CD14-positive monocyte (primary cell): ENCODE measurements at regions of chr16 and their contacts with region 1.

Region 1: GRCh38 chr16:52912565-52913173 is 140.0 kb downstream of the CHD9NB start:
- DNase-seq: peak; percentile 2 to 24 (median 23)
- H3K4me3 ChIP-seq: no peak overlapping the region
- H3K4me3 Mint-ChIP-seq: no peak overlapping the region
- H3K27ac ChIP-seq: no peak overlapping the region
- H3K27ac Mint-ChIP-seq: no peak overlapping the region
- H3K4me1 ChIP-seq: no peaks in the 10 kb centered on the region
- H3K4me1 Mint-ChIP-seq: no peaks in the 10 kb centered on the region
- H3K27me3 ChIP-seq: no peaks in the 10 kb centered on the region
- H3K27me3 Mint-ChIP-seq: peaks cover 0 to 2% (median 0%) of the 10 kb centered on the region in 3 donors
- CTCF ChIP-seq: peak; percentile 70

Region 2: GRCh38 chr16:52191531-52192134 is 721.0 kb before region 1 on chr16:
- intact Hi-C with region 1: loop called (anchors 5 kb)
- DNase-seq: peak; percentile 17 to 39 (median 23)
- H3K4me3 ChIP-seq: no peak overlapping the region
- H3K4me3 Mint-ChIP-seq: no peak overlapping the region
- H3K27ac ChIP-seq: no peak overlapping the region
- H3K27ac Mint-ChIP-seq: no peak overlapping the region
- H3K4me1 ChIP-seq: no peaks in the 10 kb centered on the region
- H3K4me1 Mint-ChIP-seq: no peaks in the 10 kb centered on the region
- H3K27me3 ChIP-seq: no peaks in the 10 kb centered on the region
- H3K27me3 Mint-ChIP-seq: peaks cover 0 to 4% (median 2%) of the 10 kb centered on the region in 3 donors
- CTCF ChIP-seq: peak; percentile 93

Region 3: DNA sequence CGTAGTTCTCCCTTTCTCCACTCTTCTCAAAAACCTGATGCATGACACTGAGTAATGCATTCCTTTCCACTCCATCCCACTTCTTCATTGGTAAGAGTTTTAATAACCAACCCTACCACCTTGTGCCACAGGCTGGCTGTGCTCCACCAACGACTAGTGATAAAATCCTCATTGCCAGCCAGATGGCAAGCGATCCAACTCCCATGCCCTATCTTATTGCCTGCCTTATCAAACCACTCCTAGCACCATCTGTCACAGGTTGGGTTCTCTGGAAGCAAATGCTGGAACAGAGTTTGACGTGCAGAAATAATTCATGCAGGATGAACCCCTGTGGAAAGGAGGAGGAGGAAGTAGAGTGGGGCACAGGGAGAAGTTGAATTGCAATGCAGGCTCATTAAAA is 40.5 kb after region 1 on chr16:
- intact Hi-C with region 1: no loop called
- DNase-seq: no peak
- H3K4me3 ChIP-seq: no peak overlapping the region
- H3K4me3 Mint-ChIP-seq: no peak overlapping the region
- H3K27ac ChIP-seq: no peak overlapping the region
- H3K27ac Mint-ChIP-seq: no peak overlapping the region
- H3K4me1 ChIP-seq: no peaks in the 10 kb centered on the region
- H3K4me1 Mint-ChIP-seq: no peaks in the 10 kb centered on the region
- H3K27me3 ChIP-seq: no peaks in the 10 kb centered on the region
- H3K27me3 Mint-ChIP-seq: peaks cover 0 to 2% (median 2%) of the 10 kb centered on the region in 3 donors
- CTCF ChIP-seq: no peak